ENCODE measurements at regions of chr13 and their contacts with region 1.

Region 1: GRCh38 chr13:99436686-99437416 is 64.4 kb upstream of the TM9SF2 start:
- DNase-seq: peak; percentile 92 to 98 (median 95)
- ATAC-seq: peak; percentile 50
- H3K4me3 ChIP-seq: no peak overlapping the region
- H3K4me3 Mint-ChIP-seq: peak overlapping the region; percentile 63
- H3K27ac ChIP-seq: peak overlapping the region; percentile 27 to 33
- H3K27ac Mint-ChIP-seq: peak overlapping the region; percentile 55
- H3K4me1 ChIP-seq: peaks cover 57% of the 10 kb centered on the region
- H3K4me1 Mint-ChIP-seq: peaks cover 52% of the 10 kb centered on the region
- H3K27me3 ChIP-seq: no peaks in the 10 kb centered on the region
- H3K27me3 Mint-ChIP-seq: no peaks in the 10 kb centered on the region
- CTCF ChIP-seq: peak; percentile 99

Region 2: GRCh38 chr13:99258210-99258860 is 178.5 kb before region 1 on chr13 and contains the start of gene GPR18:
- CTCF ChIA-PET with region 1: interaction called, 402 read pairs
- POLR2A ChIA-PET with region 1: interaction called, 3 read pairs
- intact Hi-C with region 1: no loop called
- DNase-seq: peak in 4 of 9 experiments; percentile 41 to 80 (median 53)
- ATAC-seq: peak; percentile 77
- H3K4me3 ChIP-seq: peak within 1 kb of the TSS; percentile 55 to 63
- H3K4me3 Mint-ChIP-seq: peak within 1 kb of the TSS; percentile 91
- H3K27ac ChIP-seq: peak within 1 kb of the TSS; percentile 67 to 82
- H3K27ac Mint-ChIP-seq: peak within 1 kb of the TSS; percentile 94
- H3K4me1 ChIP-seq: peaks cover 63% of the 10 kb centered on the region
- H3K4me1 Mint-ChIP-seq: peaks cover 74% of the 10 kb centered on the region
- H3K27me3 ChIP-seq: no peaks in the 10 kb centered on the region
- H3K27me3 Mint-ChIP-seq: no peaks in the 10 kb centered on the region
- CTCF ChIP-seq: no peak
- total RNA-seq, gene GPR18: 31.9 to 36.2 TPM

Region 3: GRCh38 chr13:99307648-99308339 is 129.1 kb before region 1 on chr13:
- CTCF ChIA-PET with region 1: interaction called, 17 read pairs
- POLR2A ChIA-PET with region 1: interaction called, 8 read pairs
- intact Hi-C with region 1: no loop called
- DNase-seq: peak in 5 of 9 experiments; percentile 38 to 63 (median 50)
- ATAC-seq: peak; percentile 57
- H3K4me3 ChIP-seq: peak overlapping the region in 1 of 2 experiments; percentile 53
- H3K4me3 Mint-ChIP-seq: peak overlapping the region; percentile 93
- H3K27ac ChIP-seq: peak overlapping the region; percentile 13 to 65
- H3K27ac Mint-ChIP-seq: peak overlapping the region; percentile 89
- H3K4me1 ChIP-seq: peaks cover 67% of the 10 kb centered on the region
- H3K4me1 Mint-ChIP-seq: peaks cover 81% of the 10 kb centered on the region
- H3K27me3 ChIP-seq: no peaks in the 10 kb centered on the region
- H3K27me3 Mint-ChIP-seq: no peaks in the 10 kb centered on the region
- CTCF ChIP-seq: no peak

Region 4: GRCh38 chr13:99356158-99357091 is 80.4 kb before region 1 on chr13:
- CTCF ChIA-PET with region 1: interaction called, 42 read pairs
- POLR2A ChIA-PET with region 1: no interaction called
- intact Hi-C with region 1: loop called in 1 of 2 experiments (anchors 1 kb)
- DNase-seq: peak in 8 of 9 experiments; percentile 41 to 95 (median 66)
- ATAC-seq: peak; percentile 49
- H3K4me3 ChIP-seq: peak overlapping the region in 1 of 2 experiments; percentile 24
- H3K4me3 Mint-ChIP-seq: peak overlapping the region; percentile 55
- H3K27ac ChIP-seq: peak overlapping the region; percentile 81 to 97
- H3K27ac Mint-ChIP-seq: peak overlapping the region; percentile 99
- H3K4me1 ChIP-seq: peaks cover 98% of the 10 kb centered on the region
- H3K4me1 Mint-ChIP-seq: peaks cover 97% of the 10 kb centered on the region
- H3K27me3 ChIP-seq: no peaks in the 10 kb centered on the region
- H3K27me3 Mint-ChIP-seq: no peaks in the 10 kb centered on the region
- CTCF ChIP-seq: no peak

Region 5: DNA sequence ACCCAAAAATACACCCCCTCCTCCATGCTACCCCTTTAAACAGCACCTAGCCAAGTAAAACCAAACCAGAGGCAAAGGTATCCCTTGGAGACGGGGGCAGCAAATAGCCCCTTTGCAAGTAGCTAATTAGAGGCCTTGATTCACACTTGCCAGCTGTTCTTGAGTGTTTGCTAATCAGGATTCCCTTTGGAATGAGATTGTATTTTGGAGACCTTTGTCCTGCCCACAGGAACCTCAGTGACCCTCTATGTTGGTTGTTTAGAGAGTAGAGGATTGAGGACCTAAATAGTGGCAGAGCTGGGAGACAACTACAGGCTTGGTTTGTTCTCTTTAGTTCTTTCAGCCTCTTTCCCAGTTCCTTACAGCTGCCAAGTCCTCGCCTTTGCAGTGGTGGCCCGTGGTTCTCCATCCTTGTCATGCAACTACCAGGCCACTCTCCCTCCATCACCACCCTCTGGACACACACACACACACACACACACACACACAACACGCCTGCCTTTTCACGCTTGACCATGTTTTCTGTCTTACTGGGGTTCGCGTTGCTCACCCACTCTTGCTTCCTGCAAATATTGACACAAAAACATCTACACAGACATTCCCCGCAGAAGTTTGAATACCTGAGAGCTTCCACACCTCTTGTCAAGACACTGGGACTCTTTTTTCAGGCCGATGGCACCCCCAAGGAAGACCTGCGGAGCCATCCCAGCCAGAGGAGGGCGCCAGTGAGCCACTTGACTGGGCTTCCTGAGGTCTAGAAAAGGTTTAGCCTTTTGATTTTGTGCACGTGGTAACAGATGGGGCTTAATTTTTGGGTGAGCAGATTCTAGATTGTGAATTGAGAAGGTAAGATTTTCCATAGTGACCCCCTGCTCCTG is 49.7 kb before region 1 on chr13:
- CTCF ChIA-PET with region 1: interaction called, 306 read pairs
- POLR2A ChIA-PET with region 1: interaction called, 12 read pairs
- intact Hi-C with region 1: loop called (anchors 1 kb)
- DNase-seq: peak; percentile 77 to 95 (median 87)
- ATAC-seq: peak; percentile 21
- H3K4me3 ChIP-seq: no peak overlapping the region
- H3K4me3 Mint-ChIP-seq: peak overlapping the region; percentile 27
- H3K27ac ChIP-seq: peak overlapping the region in 1 of 2 experiments; percentile 51
- H3K27ac Mint-ChIP-seq: peak overlapping the region; percentile 98
- H3K4me1 ChIP-seq: peaks cover 65% of the 10 kb centered on the region
- H3K4me1 Mint-ChIP-seq: peaks cover 71% of the 10 kb centered on the region
- H3K27me3 ChIP-seq: no peaks in the 10 kb centered on the region
- H3K27me3 Mint-ChIP-seq: no peaks in the 10 kb centered on the region
- CTCF ChIP-seq: peak; percentile 95

Region 6: GRCh38 chr13:99501184-99501847 is 64.5 kb after region 1 on chr13 and contains the start of gene TM9SF2:
- CTCF ChIA-PET with region 1: interaction called, 69 read pairs
- POLR2A ChIA-PET with region 1: interaction called, 3 read pairs
- intact Hi-C with region 1: loop called (anchors 1 kb)
- DNase-seq: peak; percentile 92 to 99 (median 97)
- ATAC-seq: peak; percentile 59
- H3K4me3 ChIP-seq: peak within 1 kb of the TSS; percentile 83 to 91
- H3K4me3 Mint-ChIP-seq: peak within 1 kb of the TSS; percentile 99
- H3K27ac ChIP-seq: peak within 1 kb of the TSS; percentile 86 to 88
- H3K27ac Mint-ChIP-seq: peak within 1 kb of the TSS; percentile 98
- H3K4me1 ChIP-seq: peaks cover 66% of the 10 kb centered on the region
- H3K4me1 Mint-ChIP-seq: peaks cover 81% of the 10 kb centered on the region
- H3K27me3 ChIP-seq: no peaks in the 10 kb centered on the region
- H3K27me3 Mint-ChIP-seq: no peaks in the 10 kb centered on the region
- CTCF ChIP-seq: no peak
- total RNA-seq, gene TM9SF2: 42.7 to 47.5 TPM

Region 7: DNA sequence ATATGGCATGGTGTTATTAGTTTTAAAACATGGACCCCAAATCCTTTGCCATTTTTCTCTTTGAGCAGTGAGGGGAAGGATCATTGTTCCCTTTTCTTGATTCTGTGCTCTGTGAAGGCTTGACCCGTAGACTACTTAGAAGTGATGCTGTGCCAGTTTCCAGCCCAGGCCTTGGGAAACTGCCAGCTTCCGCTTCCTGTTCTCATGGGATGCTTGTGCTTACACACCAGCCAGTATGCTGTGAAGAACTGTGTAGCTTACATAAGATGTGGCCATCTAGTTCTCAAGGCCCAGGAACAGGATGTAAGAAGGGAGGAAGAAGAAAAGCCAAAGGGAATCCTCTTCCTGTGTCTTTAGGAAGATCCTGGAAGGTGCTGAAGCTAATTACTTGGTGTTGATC is 833.0 kb after region 1 on chr13:
- CTCF ChIA-PET with region 1: no interaction called
- POLR2A ChIA-PET with region 1: no interaction called
- intact Hi-C with region 1: no loop called
- DNase-seq: no peak
- ATAC-seq: no peak
- H3K4me3 ChIP-seq: no peak overlapping the region
- H3K4me3 Mint-ChIP-seq: no peak overlapping the region
- H3K27ac ChIP-seq: no peak overlapping the region
- H3K27ac Mint-ChIP-seq: no peak overlapping the region
- H3K4me1 ChIP-seq: no peaks in the 10 kb centered on the region
- H3K4me1 Mint-ChIP-seq: no peaks in the 10 kb centered on the region
- H3K27me3 ChIP-seq: no peaks in the 10 kb centered on the region
- H3K27me3 Mint-ChIP-seq: no peaks in the 10 kb centered on the region
- CTCF ChIP-seq: no peak

Measured in CD8-positive, alpha-beta T cell (primary cell).